Gastrocnemius medialis (tissue), 4 donors: ENCODE measurements at regions of chr17 and their contacts with region 1.

Region 1: GRCh38 chr17:15398736-15399331 is 57.4 kb upstream of the TEKT3 start:
- DNase-seq: peak; percentile 42 to 80
- ATAC-seq: peak; percentile 86 to 88
- H3K4me3 ChIP-seq: peak overlapping the region in 1 of 4 donors; percentile 11
- H3K27ac ChIP-seq: peak overlapping the region; percentile 62 to 77 (median 68)
- H3K4me1 ChIP-seq: peaks cover 17 to 20% of the 10 kb centered on the region in 2 donors
- H3K27me3 ChIP-seq: no peaks in the 10 kb centered on the region
- CTCF ChIP-seq: no peak
- POLR2A ChIP-seq: peak in 1 of 2 donors; percentile 32

Region 2: GRCh38 chr17:15351925-15352324 is 46.9 kb before region 1 on chr17:
- in situ Hi-C with region 1: no loop called
- intact Hi-C with region 1: loop called (anchors 5 kb)
- DNase-seq: peak; percentile 53 to 70
- ATAC-seq: peak; percentile 100
- H3K4me3 ChIP-seq: no peak overlapping the region
- H3K27ac ChIP-seq: peak overlapping the region; percentile 45 to 61 (median 58)
- H3K4me1 ChIP-seq: peaks cover 0 to 15% of the 10 kb centered on the region in 2 donors
- H3K27me3 ChIP-seq: no peaks in the 10 kb centered on the region
- CTCF ChIP-seq: no peak
- POLR2A ChIP-seq: no peak

Region 3: DNA sequence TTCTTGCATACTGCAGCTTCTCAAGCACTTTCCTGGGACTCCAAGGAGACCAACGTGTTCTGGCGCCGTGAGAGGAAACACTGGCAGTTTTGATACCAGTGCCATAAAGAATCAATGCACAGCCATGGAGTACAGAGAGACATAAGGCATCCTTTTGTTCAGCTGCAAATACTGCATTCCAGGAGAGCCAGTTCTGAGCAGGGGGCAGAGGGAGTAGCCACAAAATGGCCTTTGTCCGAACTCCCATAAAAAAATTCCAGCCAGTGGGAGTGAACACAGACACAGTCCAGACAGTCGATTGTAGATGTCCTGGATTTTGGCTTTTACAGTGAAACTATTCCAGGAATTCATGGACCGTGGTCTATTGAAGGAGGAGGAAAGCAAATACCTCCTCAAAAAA is 21.2 kb before region 1 on chr17:
- in situ Hi-C with region 1: no loop called
- intact Hi-C with region 1: no loop called
- DNase-seq: no peak
- ATAC-seq: no peak
- H3K4me3 ChIP-seq: no peak overlapping the region
- H3K27ac ChIP-seq: no peak overlapping the region
- H3K4me1 ChIP-seq: no peaks in the 10 kb centered on the region
- H3K27me3 ChIP-seq: no peaks in the 10 kb centered on the region
- CTCF ChIP-seq: no peak
- POLR2A ChIP-seq: no peak